ENCODE measurements at regions of chr17 and their contacts with region 1.

Region 1: DNA sequence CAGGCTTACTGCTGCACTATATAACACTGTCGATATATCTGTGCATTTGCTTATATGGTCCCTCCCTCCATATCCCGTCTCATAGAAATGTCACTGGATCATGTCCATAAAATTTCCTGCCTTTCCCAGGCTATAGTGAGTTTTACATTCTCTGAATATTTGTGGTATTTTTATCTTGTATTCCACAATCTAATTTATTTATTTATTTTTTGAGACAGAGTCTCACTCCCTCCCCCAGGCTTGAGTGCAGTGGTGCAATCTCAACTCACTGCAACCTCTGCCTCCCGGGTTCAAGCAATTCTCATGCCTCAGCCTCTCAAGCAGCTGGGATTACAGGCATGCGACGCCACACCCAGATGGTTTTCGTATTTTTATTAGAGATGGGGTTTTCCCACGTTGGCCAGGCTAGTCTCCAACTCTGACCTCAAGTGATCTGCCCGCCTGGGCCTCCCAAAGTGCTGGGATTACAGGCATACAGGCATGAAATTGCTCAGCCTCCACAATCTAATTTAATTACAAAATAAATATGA is 12.9 kb downstream of the TRIM37 start:
- DNase-seq: no peak
- H3K4me3 ChIP-seq: peak overlapping the region in 1 of 2 donors; percentile 1
- H3K27ac ChIP-seq: peak overlapping the region; percentile 53
- H3K4me1 ChIP-seq: peaks cover 19% of the 10 kb centered on the region
- H3K27me3 ChIP-seq: no peaks in the 10 kb centered on the region
- CTCF ChIP-seq: no peak
- POLR2A ChIP-seq: no peak

Region 2: GRCh38 chr17:58189436-58190146 is 904.2 kb before region 1 on chr17:
- intact Hi-C with region 1: loop called (anchors 5 kb)
- DNase-seq: no peak
- H3K4me3 ChIP-seq: no peak overlapping the region
- H3K27ac ChIP-seq: no peak overlapping the region
- H3K4me1 ChIP-seq: no peaks in the 10 kb centered on the region
- H3K27me3 ChIP-seq: no peaks in the 10 kb centered on the region
- CTCF ChIP-seq: no peak
- POLR2A ChIP-seq: no peak

Region 3: GRCh38 chr17:59287452-59287851 is 193.7 kb after region 1 on chr17:
- intact Hi-C with region 1: no loop called
- DNase-seq: no peak
- H3K4me3 ChIP-seq: no peak overlapping the region
- H3K27ac ChIP-seq: no peak overlapping the region
- H3K4me1 ChIP-seq: no peaks in the 10 kb centered on the region
- H3K27me3 ChIP-seq: no peaks in the 10 kb centered on the region
- CTCF ChIP-seq: no peak
- POLR2A ChIP-seq: no peak